ENCODE measurements at regions of chr18 and their contacts with region 1.

Region 1: DNA sequence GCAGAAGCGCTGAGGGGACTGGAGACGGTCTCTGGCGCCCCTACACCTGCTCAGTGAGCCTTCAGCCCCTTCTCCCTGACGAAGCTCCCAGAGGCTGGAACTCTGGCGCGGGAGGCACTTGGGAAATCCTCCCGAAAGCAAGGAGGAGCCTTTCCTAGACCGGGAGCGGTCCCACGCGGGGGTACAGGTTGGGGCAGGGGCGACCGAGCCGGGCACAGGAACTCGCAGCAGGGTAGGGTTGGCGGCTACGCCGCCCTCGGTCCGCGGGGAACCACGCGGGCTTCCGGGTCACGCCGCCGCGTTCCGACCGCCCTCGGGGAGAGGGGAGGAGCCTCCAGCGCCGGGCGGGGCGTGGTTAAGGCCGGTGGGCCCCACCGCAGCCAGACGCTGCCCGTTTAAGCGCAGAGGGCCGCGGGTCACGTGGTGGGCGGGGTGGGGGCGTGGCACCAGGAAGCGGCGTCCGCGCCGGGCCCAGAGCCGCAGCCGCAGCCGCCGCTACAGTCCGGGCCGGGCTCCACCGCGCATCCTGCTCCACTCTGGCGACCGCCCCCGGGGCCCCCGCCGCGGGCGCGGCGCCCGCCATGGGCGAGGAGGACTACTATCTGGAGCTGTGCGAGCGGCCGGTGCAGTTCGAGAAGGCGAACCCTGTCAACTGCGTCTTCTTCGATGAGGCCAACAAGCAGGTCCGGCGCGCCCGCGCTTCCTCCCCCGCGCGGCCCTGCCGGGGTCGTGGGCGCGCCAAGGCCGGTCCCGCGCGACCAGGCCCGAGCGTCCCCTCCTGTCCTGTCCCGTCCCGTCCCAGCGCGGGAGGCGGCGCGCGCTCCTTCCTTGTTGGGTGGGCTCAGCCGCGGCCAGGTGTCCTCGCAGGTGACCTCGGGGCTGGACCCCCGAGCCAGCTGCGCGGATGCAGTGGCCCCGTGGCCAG is at the start of gene RMC1:
- DNase-seq: peak; percentile 97
- H3K4me3 Mint-ChIP-seq: peak within 1 kb of the TSS; percentile 92
- H3K27ac Mint-ChIP-seq: peak within 1 kb of the TSS; percentile 88
- H3K4me1 Mint-ChIP-seq: peaks cover 44% of the 10 kb centered on the region
- H3K27me3 Mint-ChIP-seq: no peaks in the 10 kb centered on the region
- total RNA-seq, gene RMC1: 26.2 to 29.7 TPM

Region 2: GRCh38 chr18:23131693-23132319 is 371.5 kb before region 1 on chr18:
- CTCF ChIA-PET with region 1: no interaction called
- intact Hi-C with region 1: loop called (anchors 2 kb)
- DNase-seq: peak; percentile 75
- H3K4me3 Mint-ChIP-seq: no peak overlapping the region
- H3K27ac Mint-ChIP-seq: no peak overlapping the region
- H3K4me1 Mint-ChIP-seq: peaks cover 14% of the 10 kb centered on the region
- H3K27me3 Mint-ChIP-seq: peaks cover 28% of the 10 kb centered on the region

Region 3: DNA sequence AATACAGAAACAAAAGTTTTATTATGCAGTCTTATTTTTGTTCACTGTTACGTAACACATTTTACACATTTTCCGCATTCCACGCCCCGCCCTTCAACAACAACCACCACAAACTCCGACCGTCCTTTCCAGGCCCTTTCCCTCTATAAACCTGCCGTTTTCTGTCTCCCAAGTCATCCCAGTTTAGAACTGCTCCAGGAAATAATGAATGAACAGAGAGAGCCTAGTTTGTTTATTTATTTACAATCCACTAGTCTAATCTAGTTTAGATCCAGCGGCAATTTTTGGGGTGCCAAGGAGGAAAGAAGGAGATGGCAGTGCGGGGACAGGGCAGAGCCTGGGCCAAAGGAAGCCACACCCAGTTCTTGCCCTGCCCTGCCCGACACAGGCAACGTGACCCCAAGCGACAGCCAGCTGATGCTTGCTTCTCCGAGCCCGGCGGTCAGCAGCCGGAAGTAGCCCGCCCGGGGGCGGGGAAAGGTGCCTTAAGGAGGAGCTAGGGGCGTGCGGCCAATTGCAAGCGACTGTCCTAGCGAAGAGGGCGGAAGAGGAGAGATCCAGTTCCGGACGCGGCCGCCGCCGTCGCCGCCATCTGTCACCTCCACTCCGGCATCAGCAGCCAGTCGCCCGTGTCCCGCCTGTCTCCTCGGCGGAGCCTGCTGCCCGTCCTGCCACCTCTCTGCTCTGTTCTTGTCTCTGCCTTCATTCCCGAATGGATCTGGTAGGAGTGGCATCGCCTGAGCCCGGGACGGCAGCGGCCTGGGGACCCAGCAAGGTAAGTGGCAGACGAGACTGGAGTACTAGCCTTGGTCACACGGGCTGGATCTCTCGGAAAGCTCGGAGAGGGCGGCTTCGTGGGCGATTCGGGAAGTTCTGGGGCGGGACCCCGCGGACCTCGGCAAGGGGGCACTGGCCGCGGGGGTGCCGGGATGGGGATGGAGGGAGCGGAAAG is 50.3 kb before region 1 on chr18 and contains the start of gene RIOK3:
- CTCF ChIA-PET with region 1: interaction called, 6 read pairs
- intact Hi-C with region 1: loop called (anchors 1 kb)
- DNase-seq: peak; percentile 94
- H3K4me3 Mint-ChIP-seq: peak within 1 kb of the TSS; percentile 99
- H3K27ac Mint-ChIP-seq: peak within 1 kb of the TSS; percentile 91
- H3K4me1 Mint-ChIP-seq: peaks cover 42% of the 10 kb centered on the region
- H3K27me3 Mint-ChIP-seq: no peaks in the 10 kb centered on the region
- total RNA-seq, gene RIOK3: 53.8 to 59.5 TPM

Region 4: DNA sequence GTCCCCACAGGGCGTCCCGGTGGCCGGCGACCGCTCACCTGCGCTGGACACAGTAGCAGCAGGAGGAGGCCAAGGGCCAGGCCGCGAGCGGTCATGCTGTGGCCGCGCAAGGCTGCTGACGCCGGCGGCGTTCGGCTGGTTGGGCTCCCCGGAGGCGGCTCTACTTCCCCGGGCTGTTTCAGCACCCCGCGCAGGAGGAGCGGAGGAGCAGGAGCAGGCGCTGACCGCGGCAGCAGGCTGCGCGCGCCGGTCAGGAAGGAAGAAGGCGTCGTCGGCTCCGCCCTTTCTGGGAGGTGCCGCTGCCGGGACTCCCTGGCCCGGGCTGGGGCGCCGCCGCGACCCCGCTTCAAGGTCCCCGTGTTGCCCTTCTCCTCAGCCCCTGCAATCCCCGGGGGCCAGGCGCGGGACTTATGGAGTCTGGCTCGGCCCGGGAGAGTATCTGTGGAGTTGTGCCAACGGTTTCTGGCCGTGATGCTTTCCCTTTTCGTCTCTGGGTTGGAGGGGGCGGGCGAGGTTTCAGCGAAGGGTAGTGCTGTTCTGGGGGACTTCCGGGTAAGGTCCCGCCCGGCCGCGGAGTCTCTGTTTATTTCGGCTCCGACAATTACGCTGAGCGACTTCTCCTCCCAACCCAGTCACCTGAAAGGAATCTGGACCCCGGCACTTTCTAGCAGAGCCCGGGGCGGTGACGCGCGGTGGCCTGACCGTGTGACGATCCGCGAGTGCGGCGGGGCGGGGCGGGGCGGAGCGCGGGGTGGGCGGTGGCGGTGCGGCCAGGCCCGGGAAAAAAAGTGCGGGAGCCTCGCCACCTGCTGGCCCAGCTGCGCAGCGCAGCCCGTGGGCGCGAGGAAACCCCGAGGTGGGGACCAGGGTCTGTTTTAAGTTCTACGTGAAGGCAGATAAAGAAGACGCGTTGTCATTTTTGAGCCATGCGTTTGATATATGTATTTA is 83.2 kb after region 1 on chr18 and contains the start of gene NPC1:
- CTCF ChIA-PET with region 1: interaction called, 10 read pairs
- intact Hi-C with region 1: loop called (anchors 1 kb)
- DNase-seq: peak; percentile 91
- H3K4me3 Mint-ChIP-seq: peak within 1 kb of the TSS; percentile 91
- H3K27ac Mint-ChIP-seq: peak within 1 kb of the TSS; percentile 95
- H3K4me1 Mint-ChIP-seq: peaks cover 34% of the 10 kb centered on the region
- H3K27me3 Mint-ChIP-seq: no peaks in the 10 kb centered on the region
- total RNA-seq, gene NPC1: 25.9 to 27.9 TPM

Region 5: DNA sequence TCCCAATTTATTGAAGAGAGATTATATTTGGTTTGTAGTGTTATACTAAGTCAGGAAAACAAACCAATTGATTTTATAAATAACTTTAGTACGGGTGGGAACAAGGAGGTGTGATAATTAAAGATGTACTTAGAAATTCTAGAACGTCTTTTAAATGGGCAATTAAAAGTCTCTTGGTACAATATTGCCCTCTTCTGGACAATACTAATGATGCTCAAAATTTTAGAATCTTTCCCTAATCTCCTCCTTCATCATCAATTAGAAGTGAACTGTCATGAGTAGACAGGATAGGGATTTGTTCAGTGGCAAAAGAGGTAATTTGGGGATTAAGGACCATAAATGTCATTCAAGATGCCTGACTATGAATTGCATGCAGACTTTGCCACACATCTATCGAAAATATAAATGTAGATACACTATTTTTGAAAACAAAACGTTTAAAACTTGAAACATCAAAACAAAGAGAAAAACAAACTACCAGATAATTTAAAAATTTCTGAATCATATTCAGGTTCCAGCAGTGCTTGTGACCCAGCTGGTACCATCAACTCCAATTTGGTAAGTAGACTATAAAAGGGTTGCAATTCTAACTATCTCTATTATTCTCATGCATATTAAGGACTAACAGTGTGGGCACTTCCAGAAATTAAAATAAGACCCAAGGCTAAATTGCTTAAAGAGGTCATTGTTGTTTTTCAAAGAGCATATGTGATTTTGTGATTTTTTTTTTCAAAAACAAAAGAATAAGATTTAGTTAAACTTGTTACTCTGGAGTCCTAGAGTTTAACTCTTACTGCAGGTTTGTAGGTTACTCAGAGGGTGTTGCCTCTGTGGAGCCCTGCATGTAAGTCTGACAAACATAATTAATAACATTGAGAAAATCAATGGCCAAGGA is 309.5 kb after region 1 on chr18:
- CTCF ChIA-PET with region 1: interaction called, 3 read pairs
- intact Hi-C with region 1: loop called (anchors 2 kb)
- DNase-seq: no peak
- H3K4me3 Mint-ChIP-seq: no peak overlapping the region
- H3K27ac Mint-ChIP-seq: no peak overlapping the region
- H3K4me1 Mint-ChIP-seq: peaks cover 21% of the 10 kb centered on the region
- H3K27me3 Mint-ChIP-seq: no peaks in the 10 kb centered on the region

Region 6: DNA sequence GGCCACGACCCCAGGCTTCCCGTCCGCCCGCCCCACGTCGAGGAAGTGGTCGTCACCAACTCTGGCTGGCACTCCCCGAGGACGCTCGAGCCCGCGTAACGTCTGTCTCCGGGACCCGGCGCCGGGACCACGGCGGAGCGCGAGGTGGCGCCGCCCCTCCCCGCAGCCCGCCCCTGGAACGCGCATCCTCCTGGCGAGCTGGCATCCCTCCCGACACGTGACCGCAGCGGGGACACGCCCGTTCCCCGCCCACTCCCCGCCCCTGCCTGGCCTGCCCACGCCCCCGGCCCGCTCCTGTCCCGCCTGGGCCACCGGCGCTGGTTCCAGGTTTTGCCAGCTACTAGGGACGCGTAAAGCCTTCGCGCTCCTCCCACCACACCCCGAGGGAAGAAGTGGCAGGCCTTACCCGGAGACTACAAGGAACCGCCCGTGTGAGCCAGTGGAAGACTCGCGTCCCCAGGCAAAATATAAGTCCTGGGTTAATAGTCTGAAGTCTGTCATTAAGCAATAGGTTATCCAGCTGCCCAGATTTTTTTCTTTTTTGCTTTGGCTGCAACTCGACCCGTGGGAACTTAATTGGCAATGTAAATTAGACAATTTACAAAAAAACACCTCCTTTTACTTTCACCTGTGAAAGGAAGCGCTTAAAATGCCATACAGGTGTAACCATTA is 894.5 kb after region 1 on chr18 and contains the start of gene OSBPL1A:
- CTCF ChIA-PET with region 1: no interaction called
- intact Hi-C with region 1: loop called (anchors 1 kb)
- DNase-seq: peak; percentile 88
- H3K4me3 Mint-ChIP-seq: peak within 1 kb of the TSS; percentile 76
- H3K27ac Mint-ChIP-seq: no peak within 1 kb of the TSS
- H3K4me1 Mint-ChIP-seq: peaks cover 18% of the 10 kb centered on the region
- H3K27me3 Mint-ChIP-seq: peaks cover 15% of the 10 kb centered on the region
- total RNA-seq, gene OSBPL1A: 2.4 to 2.7 TPM